HEK293 (cell line): ENCODE measurements at regions of chr16 and their contacts with region 1.

Region 1: GRCh38 chr16:55248494-55248893 is 75.5 kb upstream of the IRX6 start:
- H3K4me3 ChIP-seq: no peak overlapping the region
- H3K27ac ChIP-seq: no peak overlapping the region
- H3K4me1 ChIP-seq: no peaks in the 10 kb centered on the region
- CTCF ChIP-seq: no peak

Region 2: DNA sequence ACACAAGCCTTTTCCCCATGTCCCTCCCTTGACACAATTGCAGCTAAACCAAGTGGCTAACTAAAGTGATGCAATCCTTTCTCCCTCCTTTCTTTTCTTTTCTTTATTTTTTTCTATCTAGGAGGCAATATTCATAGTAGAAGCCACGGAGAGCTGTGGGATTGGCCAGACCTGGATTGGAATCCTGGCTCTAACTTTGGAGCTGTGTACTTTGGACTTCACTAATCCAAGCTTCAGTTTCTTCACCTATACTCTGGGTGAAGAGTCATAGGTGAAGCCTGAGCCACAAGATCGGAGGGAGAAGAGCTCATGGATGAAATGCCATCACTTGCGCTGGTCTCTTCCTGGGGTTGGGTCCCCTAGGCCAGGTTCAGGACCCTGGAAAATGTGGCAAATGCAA is 140.6 kb before region 1 on chr16:
- CTCF ChIA-PET with region 1: interaction called, 12 read pairs
- POLR2A ChIA-PET with region 1: no interaction called
- H3K4me3 ChIP-seq: no peak overlapping the region
- H3K27ac ChIP-seq: no peak overlapping the region
- H3K4me1 ChIP-seq: no peaks in the 10 kb centered on the region
- CTCF ChIP-seq: no peak